K562 (cell line): ENCODE measurements at regions of chr17 and their contacts with region 1.

Region 1: GRCh38 chr17:60383379-60383778 is 8.6 kb downstream of the USP32 start:
- DNase-seq: no peak
- ATAC-seq: peak; percentile 5
- H3K4me3 ChIP-seq: no peak overlapping the region
- H3K27ac ChIP-seq: peak overlapping the region; percentile 40; the same call in 2 of the 3 replicates
- H3K4me1 ChIP-seq: peaks cover 13 to 40% of the 10 kb centered on the region in 2 experiments
- H3K27me3 ChIP-seq: no peaks in the 10 kb centered on the region
- CTCF ChIP-seq: no peak
- EP300 ChIP-seq: peak; percentile 36; the same call in 1 of the 2 replicates
- POLR2A ChIP-seq: no peak
- RAD21 ChIP-seq: no peak

Region 2: GRCh38 chr17:60372790-60373483 is 10.4 kb before region 1 on chr17:
- CTCF ChIA-PET with region 1: no interaction called
- POLR2A ChIA-PET with region 1: interaction called, 11 read pairs
- in situ Hi-C with region 1: no loop called
- intact Hi-C with region 1: no loop called
- DNase-seq: no peak
- ATAC-seq: peak; percentile 77
- H3K4me3 ChIP-seq: no peak overlapping the region
- H3K27ac ChIP-seq: peak overlapping the region; percentile 6; the same call in 2 of the 3 replicates
- H3K4me1 ChIP-seq: peaks cover 15 to 17% of the 10 kb centered on the region in 2 experiments
- H3K27me3 ChIP-seq: no peaks in the 10 kb centered on the region; a peak in 1 of 5 replicates
- CTCF ChIP-seq: no peak
- EP300 ChIP-seq: no peak
- POLR2A ChIP-seq: no peak
- RAD21 ChIP-seq: no peak

Region 3: DNA sequence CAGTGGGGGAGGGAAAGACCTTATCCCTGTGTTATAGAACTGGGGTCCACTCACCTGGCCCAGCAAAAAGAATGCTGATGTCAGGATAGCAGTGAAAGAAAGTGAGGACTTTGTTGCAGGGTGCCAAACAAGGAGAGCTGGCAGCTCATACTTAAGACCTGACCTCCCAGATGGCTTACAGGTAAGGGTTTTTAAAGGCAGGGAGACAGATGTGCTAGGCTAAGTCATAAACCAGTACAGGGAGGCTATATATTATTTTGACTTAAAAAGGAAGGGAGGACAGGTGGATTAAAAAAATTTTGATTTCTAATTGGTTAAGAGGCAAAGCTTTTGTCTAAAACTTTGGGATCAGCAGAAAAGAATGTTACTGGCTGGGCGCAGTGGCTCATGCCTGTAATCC is 29.8 kb after region 1 on chr17:
- CTCF ChIA-PET with region 1: no interaction called
- POLR2A ChIA-PET with region 1: no interaction called
- in situ Hi-C with region 1: no loop called
- intact Hi-C with region 1: no loop called
- DNase-seq: no peak
- ATAC-seq: no peak
- H3K4me3 ChIP-seq: no peak overlapping the region
- H3K27ac ChIP-seq: no peak overlapping the region
- H3K4me1 ChIP-seq: peaks cover 0 to 2% of the 10 kb centered on the region in 2 experiments; a peak in 2 of 5 replicates
- H3K27me3 ChIP-seq: no peaks in the 10 kb centered on the region
- CTCF ChIP-seq: no peak
- EP300 ChIP-seq: no peak
- POLR2A ChIP-seq: no peak
- RAD21 ChIP-seq: no peak